Panc1 (cell line): ENCODE measurements at regions of chr3 and their contacts with region 1.

Region 1: DNA sequence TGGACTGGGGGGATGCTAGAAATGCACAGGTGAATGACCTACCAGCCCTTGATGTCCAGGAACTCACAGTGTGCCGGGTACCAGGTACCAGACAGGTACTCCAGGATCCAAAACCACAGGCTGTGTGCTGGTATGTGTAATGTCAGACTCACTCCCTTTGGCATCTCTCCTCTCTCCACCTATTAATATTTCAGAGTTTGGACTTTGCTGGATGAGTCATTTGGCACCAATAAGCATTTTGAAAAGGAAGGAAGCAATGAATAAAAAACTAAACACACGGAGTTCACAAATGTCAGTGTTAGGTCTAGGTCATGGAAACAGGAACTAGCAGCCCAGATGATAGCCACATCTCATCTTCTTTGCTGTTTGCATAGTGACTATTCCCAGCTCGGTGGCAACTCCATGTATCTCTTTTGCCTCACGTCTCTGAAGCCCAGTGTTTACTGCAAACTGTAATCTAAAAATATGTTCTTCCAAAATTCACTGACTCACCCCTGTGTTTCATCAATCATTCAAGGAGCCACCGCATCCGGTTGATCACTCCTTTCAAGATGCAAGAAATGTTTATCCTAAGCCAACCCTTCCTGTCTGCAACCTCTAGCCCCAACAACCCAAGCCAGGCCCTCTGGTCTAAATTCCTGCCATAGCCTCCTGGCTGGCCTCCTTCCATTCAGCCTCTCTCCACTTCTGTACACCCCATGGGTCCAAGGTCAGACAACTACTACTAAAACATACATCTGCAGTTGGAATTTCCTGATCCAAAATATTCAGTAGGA is 8.4 kb downstream of the ITGB5 start:
- DNase-seq: peak; percentile 99
- ATAC-seq: peak; percentile 88
- H3K4me3 ChIP-seq: peak overlapping the region in 1 of 2 experiments; percentile 4; a peak in 2 of 4 replicates
- H3K27ac ChIP-seq: peak overlapping the region; percentile 92
- H3K4me1 ChIP-seq: peaks cover 79% of the 10 kb centered on the region
- H3K27me3 ChIP-seq: no peaks in the 10 kb centered on the region
- CTCF ChIP-seq: no peak

Region 2: DNA sequence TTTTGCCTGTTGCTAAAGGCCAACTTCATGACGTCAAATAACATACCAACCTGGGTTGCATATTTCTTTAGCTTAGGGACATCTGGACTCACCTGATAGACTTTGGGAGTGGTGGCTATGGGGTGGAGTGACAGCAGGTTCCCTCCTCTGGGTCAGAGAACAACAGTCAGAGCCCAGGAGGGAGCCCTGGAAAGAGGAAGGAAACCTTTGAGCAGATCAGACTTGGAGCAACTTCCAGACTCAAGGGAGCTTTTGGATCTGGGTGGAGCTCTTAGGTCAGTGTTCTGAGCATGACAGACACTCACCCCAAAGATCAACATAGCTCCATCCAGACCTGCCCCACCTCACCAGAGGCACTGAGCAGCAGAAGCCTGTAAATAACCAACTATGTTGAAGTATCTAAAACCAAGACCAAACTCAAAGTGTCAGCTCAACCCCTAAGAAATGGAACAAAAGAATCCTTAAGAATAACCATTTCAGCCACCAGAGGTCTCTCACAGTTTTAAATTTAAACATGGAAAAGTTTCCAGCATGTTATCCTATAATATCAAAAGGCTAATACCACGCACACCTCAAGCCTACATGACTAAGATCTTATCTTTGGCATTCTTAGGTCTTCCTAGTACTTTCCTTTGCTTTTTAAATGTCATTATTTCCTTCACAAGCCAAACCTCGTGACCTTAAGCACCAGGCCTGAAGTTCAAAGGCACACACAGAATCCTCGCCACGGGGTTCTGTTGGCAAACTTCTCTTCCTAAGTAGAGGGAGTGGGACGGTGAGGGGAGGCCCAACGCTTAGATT is 92.1 kb before region 1 on chr3:
- CTCF ChIA-PET with region 1: no interaction called
- POLR2A ChIA-PET with region 1: no interaction called
- in situ Hi-C with region 1: no loop called
- intact Hi-C with region 1: no loop called
- DNase-seq: no peak
- ATAC-seq: peak; percentile 32
- H3K4me3 ChIP-seq: no peak overlapping the region
- H3K27ac ChIP-seq: peak overlapping the region; percentile 51
- H3K4me1 ChIP-seq: peaks cover 11% of the 10 kb centered on the region
- H3K27me3 ChIP-seq: no peaks in the 10 kb centered on the region
- CTCF ChIP-seq: no peak

Region 3: GRCh38 chr3:124839896-124840295 is 38.9 kb before region 1 on chr3:
- CTCF ChIA-PET with region 1: interaction called, 4 read pairs
- POLR2A ChIA-PET with region 1: no interaction called
- in situ Hi-C with region 1: loop called (anchors 5 kb)
- intact Hi-C with region 1: no loop called
- DNase-seq: no peak
- ATAC-seq: no peak
- H3K4me3 ChIP-seq: no peak overlapping the region
- H3K27ac ChIP-seq: peak overlapping the region; percentile 92
- H3K4me1 ChIP-seq: peaks cover 48% of the 10 kb centered on the region
- H3K27me3 ChIP-seq: no peaks in the 10 kb centered on the region
- CTCF ChIP-seq: no peak